ENCODE measurements at regions of chr5 and their contacts with region 1.

Region 1: GRCh38 chr5:132820162-132820754 is 7.2 kb downstream of the SOWAHA start:
- DNase-seq: peak; percentile 87
- H3K4me3 ChIP-seq: no peak overlapping the region
- H3K27ac ChIP-seq: no peak overlapping the region
- H3K4me1 ChIP-seq: peaks cover 2% of the 10 kb centered on the region
- H3K27me3 ChIP-seq: no peaks in the 10 kb centered on the region
- CTCF ChIP-seq: peak; percentile 78 to 91
- POLR2A ChIP-seq: no peak

Region 2: GRCh38 chr5:132293066-132293991 is 526.9 kb before region 1 on chr5:
- CTCF ChIA-PET with region 1: interaction called, 4 read pairs
- POLR2A ChIA-PET with region 1: no interaction called
- dilution Hi-C with region 1: no loop called
- intact Hi-C with region 1: loop called (anchors 10 kb)
- DNase-seq: peak; percentile 89
- H3K4me3 ChIP-seq: peak overlapping the region; percentile 37 to 70 (median 53)
- H3K27ac ChIP-seq: peak overlapping the region; percentile 93
- H3K4me1 ChIP-seq: peaks cover 25% of the 10 kb centered on the region
- H3K27me3 ChIP-seq: no peaks in the 10 kb centered on the region
- CTCF ChIP-seq: peak in 1 of 2 donors; percentile 40
- POLR2A ChIP-seq: no peak

Region 3: DNA sequence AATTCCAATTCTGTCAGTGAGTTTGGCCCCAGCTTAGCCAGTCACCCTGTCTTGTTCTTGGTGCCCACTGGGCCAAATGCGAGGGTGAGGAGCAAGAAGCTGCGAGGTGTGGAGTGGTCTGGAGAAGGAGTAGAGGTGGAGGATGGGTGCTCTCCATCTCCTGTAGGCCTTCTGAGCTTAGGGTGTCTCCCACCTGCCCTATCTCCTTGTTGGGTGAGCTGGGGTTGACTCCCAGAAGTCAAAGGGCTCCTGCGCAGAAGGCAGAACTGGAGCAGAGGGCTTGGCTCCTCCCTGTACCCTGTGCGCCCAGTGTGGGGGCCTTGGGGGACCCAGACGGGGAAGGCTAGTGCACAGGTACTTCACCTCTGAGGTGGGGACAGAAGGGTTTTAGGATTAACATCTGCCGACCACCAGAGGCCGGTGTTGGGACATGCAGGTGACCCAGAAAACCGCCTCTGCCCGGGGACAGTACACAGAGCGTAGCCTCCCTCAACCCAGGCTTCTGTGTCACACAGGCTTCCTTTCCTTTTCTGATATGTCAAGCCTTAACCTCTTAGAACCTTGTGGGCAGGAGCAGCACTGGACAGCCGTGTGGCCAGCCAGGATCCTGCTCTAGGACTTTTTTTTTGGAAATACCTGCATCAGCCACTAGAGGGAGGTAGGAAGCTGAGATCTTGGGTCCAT is 293.8 kb before region 1 on chr5:
- CTCF ChIA-PET with region 1: interaction called, 42 read pairs
- POLR2A ChIA-PET with region 1: no interaction called
- dilution Hi-C with region 1: no loop called
- intact Hi-C with region 1: loop called (anchors 5 kb)
- DNase-seq: peak; percentile 75
- H3K4me3 ChIP-seq: no peak overlapping the region
- H3K27ac ChIP-seq: no peak overlapping the region
- H3K4me1 ChIP-seq: no peaks in the 10 kb centered on the region
- H3K27me3 ChIP-seq: peaks cover under 1 to 3% of the 10 kb centered on the region in 2 experiments
- CTCF ChIP-seq: peak; percentile 76 to 83
- POLR2A ChIP-seq: no peak

Region 4: GRCh38 chr5:132746954-132747615 is 73.2 kb before region 1 on chr5 and contains the start of gene CCNI2:
- CTCF ChIA-PET with region 1: interaction called, 179 read pairs
- POLR2A ChIA-PET with region 1: no interaction called
- dilution Hi-C with region 1: no loop called
- intact Hi-C with region 1: no loop called
- DNase-seq: peak; percentile 50
- H3K4me3 ChIP-seq: peak within 1 kb of the TSS; percentile 32 to 34 (median 34)
- H3K27ac ChIP-seq: no peak within 1 kb of the TSS
- H3K4me1 ChIP-seq: peaks cover 5% of the 10 kb centered on the region
- H3K27me3 ChIP-seq: peaks cover 2 to 5% of the 10 kb centered on the region in 2 experiments
- CTCF ChIP-seq: peak; percentile 28 to 38
- POLR2A ChIP-seq: no peak
- total RNA-seq, gene CCNI2: 0.53 TPM in 1 of 2 replicates, not detected in the other

Region 5: GRCh38 chr5:132777209-132778069 is 42.8 kb before region 1 on chr5 and contains the start of gene SEPTIN8:
- CTCF ChIA-PET with region 1: interaction called, 19 read pairs
- POLR2A ChIA-PET with region 1: no interaction called
- dilution Hi-C with region 1: no loop called
- intact Hi-C with region 1: loop called (anchors 2 kb)
- DNase-seq: peak; percentile 33
- H3K4me3 ChIP-seq: peak within 1 kb of the TSS; percentile 52 to 75 (median 62)
- H3K27ac ChIP-seq: peak within 1 kb of the TSS; percentile 35
- H3K4me1 ChIP-seq: peaks cover 26% of the 10 kb centered on the region
- H3K27me3 ChIP-seq: no peaks in the 10 kb centered on the region
- CTCF ChIP-seq: no peak
- POLR2A ChIP-seq: no peak
- total RNA-seq, gene SEPTIN8: 77.2 and 82.1 TPM in 2 replicates

Region 6: GRCh38 chr5:132839426-132840301 is 19.4 kb after region 1 on chr5:
- CTCF ChIA-PET with region 1: interaction called, 17 read pairs
- POLR2A ChIA-PET with region 1: no interaction called
- dilution Hi-C with region 1: no loop called
- intact Hi-C with region 1: no loop called
- DNase-seq: peak; percentile 93
- H3K4me3 ChIP-seq: peak overlapping the region in 1 of 3 experiments; percentile 13
- H3K27ac ChIP-seq: peak overlapping the region; percentile 76
- H3K4me1 ChIP-seq: peaks cover 22% of the 10 kb centered on the region
- H3K27me3 ChIP-seq: no peaks in the 10 kb centered on the region
- CTCF ChIP-seq: no peak
- POLR2A ChIP-seq: no peak

Measured in endothelial cell of umbilical vein (primary cell).